ENCODE measurements at regions of chr3 and their contacts with region 1.

Region 1: DNA sequence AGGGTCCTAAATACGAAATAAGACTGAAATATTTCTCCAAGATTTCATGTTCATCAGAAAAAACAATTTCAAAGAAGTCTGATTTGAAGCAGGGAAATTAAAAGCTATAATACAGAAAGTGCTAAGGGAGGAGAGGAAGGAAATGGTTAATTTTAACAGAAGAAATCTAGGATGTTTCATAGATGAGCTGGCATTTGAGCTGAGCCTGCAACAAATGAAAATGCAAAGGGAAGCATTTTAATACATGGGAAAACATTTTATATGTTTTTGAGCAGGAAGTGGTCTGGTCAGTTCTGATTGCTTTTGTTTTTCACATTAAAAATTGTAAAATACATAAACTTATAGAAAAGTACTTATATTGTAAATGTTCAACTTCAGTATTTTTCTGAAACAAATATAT is 17.2 kb upstream of the RAP2B start:
- DNase-seq: no peak
- ATAC-seq: no peak
- H3K4me3 ChIP-seq: no peak overlapping the region
- H3K27ac ChIP-seq: peak overlapping the region in 1 of 10 donors; percentile 77
- H3K4me1 ChIP-seq: peaks cover 0 to 24% (median 0%) of the 10 kb centered on the region in 9 donors
- H3K27me3 ChIP-seq: no peaks in the 10 kb centered on the region
- CTCF ChIP-seq: no peak

Region 2: DNA sequence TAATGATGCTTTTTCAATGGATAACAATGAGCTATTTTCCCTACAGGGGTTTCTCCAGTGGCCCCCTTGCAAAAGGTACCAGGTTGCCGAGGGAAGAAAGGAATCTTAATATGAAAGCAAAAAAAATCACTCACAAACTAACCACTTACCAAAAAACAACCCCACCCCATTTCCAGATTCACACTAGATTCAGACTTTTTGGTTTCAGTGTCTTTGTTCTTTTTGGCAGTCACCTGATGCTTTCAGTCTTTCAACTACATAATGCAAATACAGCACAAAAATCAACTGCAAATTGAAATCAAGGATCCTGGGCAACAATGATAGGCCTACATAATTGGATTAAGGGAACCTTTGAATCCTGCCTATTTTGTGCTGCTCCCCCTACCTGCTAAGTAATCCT is 53.8 kb before region 1 on chr3:
- intact Hi-C with region 1: loop called in 1 of 10 experiments (anchors 10 kb)
- DNase-seq: no peak
- ATAC-seq: no peak
- H3K4me3 ChIP-seq: no peak overlapping the region
- H3K27ac ChIP-seq: no peak overlapping the region
- H3K4me1 ChIP-seq: no peaks in the 10 kb centered on the region
- H3K27me3 ChIP-seq: no peaks in the 10 kb centered on the region
- CTCF ChIP-seq: no peak

Measured in heart right ventricle (tissue), 16 donors.